Sigmoid colon (tissue), 7 donors: ENCODE measurements at regions of chr10 and their contacts with region 1.

Region 1: DNA sequence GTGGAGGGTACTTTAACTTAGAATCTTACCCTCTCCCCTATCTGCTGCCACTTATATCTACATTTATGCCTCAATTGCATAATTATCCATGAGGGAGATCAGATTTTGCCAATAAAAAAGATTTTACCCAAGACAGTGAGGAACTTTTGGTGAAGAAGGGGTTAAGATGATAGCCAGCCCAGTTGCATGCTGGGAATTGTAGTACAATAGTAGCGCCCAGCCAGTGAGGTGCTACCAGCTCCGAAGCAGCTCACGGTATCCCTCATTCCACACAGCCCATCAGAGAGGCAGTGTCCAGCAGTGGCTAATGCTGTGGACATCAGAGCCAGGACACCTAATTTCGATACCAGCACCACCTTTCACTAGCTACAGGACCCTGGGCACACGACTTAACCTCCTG is 5.9 kb upstream of the LGI1 start:
- DNase-seq: no peak
- H3K4me3 ChIP-seq: peak overlapping the region in 3 of 4 donors; percentile 10 to 32 (median 20)
- H3K27ac ChIP-seq: peak overlapping the region in 2 of 4 donors; percentile 28 to 32
- H3K4me1 ChIP-seq: peaks cover 0 to 79% (median 47%) of the 10 kb centered on the region in 4 donors
- H3K27me3 ChIP-seq: no peaks in the 10 kb centered on the region
- CTCF ChIP-seq: no peak
- EP300 ChIP-seq: no peak
- POLR2A ChIP-seq: no peak

Region 2: GRCh38 chr10:93376372-93377293 is 375.2 kb before region 1 on chr10:
- intact Hi-C with region 1: no loop called
- DNase-seq: peak; percentile 87
- H3K4me3 ChIP-seq: peak overlapping the region in 2 of 4 donors; percentile 5 to 22
- H3K27ac ChIP-seq: peak overlapping the region; percentile 82 to 90 (median 84)
- H3K4me1 ChIP-seq: peaks cover 0 to 43% (median 30%) of the 10 kb centered on the region in 4 donors
- H3K27me3 ChIP-seq: no peaks in the 10 kb centered on the region
- CTCF ChIP-seq: peak; percentile 91 to 98 (median 97)
- EP300 ChIP-seq: no peak
- POLR2A ChIP-seq: peak in 1 of 2 donors; percentile 34

Region 3: GRCh38 chr10:93471110-93471651 is 280.7 kb before region 1 on chr10:
- intact Hi-C with region 1: no loop called
- DNase-seq: peak; percentile 60
- H3K4me3 ChIP-seq: no peak overlapping the region
- H3K27ac ChIP-seq: peak overlapping the region; percentile 80 to 95 (median 88)
- H3K4me1 ChIP-seq: peaks cover 0 to 88% (median 85%) of the 10 kb centered on the region in 4 donors
- H3K27me3 ChIP-seq: no peaks in the 10 kb centered on the region
- CTCF ChIP-seq: no peak
- EP300 ChIP-seq: peak in 2 of 4 donors; percentile 27 to 72
- POLR2A ChIP-seq: no peak

Region 4: GRCh38 chr10:93566435-93567276 is 185.2 kb before region 1 on chr10 and contains the start of gene FFAR4:
- intact Hi-C with region 1: no loop called
- DNase-seq: peak; percentile 60
- H3K4me3 ChIP-seq: peak within 1 kb of the TSS in 3 of 4 donors; percentile 14 to 29 (median 23)
- H3K27ac ChIP-seq: no peak within 1 kb of the TSS
- H3K4me1 ChIP-seq: peaks cover 0 to 11% (median 9%) of the 10 kb centered on the region in 4 donors
- H3K27me3 ChIP-seq: peaks cover 14 to 50% (median 16%) of the 10 kb centered on the region in 3 donors
- CTCF ChIP-seq: no peak
- EP300 ChIP-seq: no peak
- POLR2A ChIP-seq: no peak
- total RNA-seq, gene FFAR4: 0.36 to 0.99 (median 0.55) TPM in 3 of 4 donors, not detected in the other

Region 5: DNA sequence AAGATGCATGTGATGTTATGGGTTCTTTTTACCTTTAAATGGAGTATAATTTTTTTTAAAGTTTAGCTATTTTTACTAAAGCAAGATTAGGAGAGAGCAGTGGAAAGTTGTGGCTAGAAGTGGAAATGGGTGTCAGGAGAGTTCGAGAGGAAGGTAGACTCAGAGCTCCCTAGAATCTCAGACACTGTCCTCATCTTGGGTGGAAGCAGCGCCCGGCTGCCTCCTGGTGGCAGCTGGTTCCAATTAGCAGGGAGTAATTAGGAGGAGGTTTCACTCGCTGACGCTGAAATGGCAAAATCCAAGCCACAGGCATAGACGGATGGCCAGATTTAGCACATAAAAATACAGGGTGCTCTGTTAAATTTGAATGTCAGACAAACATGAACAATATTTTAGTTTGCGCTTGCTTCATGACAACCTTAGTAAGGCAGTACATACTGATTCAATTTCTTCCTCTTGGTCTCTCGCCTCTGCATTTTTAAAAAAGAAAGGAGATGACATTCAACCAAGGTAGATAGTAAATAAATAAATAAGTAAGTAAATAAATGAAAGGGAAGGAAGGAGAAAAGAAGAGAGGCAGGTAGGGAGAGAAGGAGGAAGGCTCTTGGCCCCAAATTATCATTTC is 64.4 kb after region 1 on chr10:
- intact Hi-C with region 1: loop called (anchors 5 kb)
- DNase-seq: peak; percentile 78
- H3K4me3 ChIP-seq: peak overlapping the region in 1 of 4 donors; percentile 18
- H3K27ac ChIP-seq: peak overlapping the region in 1 of 4 donors; percentile 25
- H3K4me1 ChIP-seq: peaks cover 0 to 6% (median 2%) of the 10 kb centered on the region in 4 donors
- H3K27me3 ChIP-seq: no peaks in the 10 kb centered on the region
- CTCF ChIP-seq: peak; percentile 65 to 75 (median 74)
- EP300 ChIP-seq: no peak
- POLR2A ChIP-seq: no peak

Region 6: DNA sequence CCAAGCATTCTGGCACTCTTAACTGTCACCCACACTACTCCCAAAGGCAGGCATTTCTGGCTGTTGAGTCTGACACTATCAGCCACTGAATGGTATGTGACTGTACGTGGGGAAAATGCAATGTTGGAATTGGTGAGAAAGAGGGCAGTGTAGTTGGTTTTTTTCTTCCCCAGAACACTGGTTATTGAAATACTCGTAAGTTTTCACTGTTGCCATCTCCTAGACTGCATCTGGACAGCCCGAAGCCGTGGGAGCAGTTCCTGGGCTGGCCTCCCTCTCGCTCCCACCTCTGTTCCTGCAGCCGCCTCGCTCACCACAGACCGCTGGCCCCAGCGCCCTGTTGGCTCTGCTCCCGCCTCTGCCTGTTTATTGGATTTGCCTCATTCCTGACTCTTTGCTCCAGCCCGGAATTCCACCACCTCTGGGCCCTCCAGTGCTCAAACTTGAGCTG is 247.6 kb after region 1 on chr10:
- intact Hi-C with region 1: no loop called
- DNase-seq: peak; percentile 82
- H3K4me3 ChIP-seq: peak overlapping the region in 2 of 4 donors; percentile 6 to 8
- H3K27ac ChIP-seq: peak overlapping the region; percentile 59 to 75 (median 69)
- H3K4me1 ChIP-seq: peaks cover 0 to 42% (median 16%) of the 10 kb centered on the region in 4 donors
- H3K27me3 ChIP-seq: no peaks in the 10 kb centered on the region
- CTCF ChIP-seq: no peak
- EP300 ChIP-seq: no peak
- POLR2A ChIP-seq: no peak